Activated CD4-positive, alpha-beta T cell treated with anti-CD3 and anti-CD28 coated beads for 36 hours (primary cell): ENCODE measurements at regions of chr7 and their contacts with region 1.

Region 1: DNA sequence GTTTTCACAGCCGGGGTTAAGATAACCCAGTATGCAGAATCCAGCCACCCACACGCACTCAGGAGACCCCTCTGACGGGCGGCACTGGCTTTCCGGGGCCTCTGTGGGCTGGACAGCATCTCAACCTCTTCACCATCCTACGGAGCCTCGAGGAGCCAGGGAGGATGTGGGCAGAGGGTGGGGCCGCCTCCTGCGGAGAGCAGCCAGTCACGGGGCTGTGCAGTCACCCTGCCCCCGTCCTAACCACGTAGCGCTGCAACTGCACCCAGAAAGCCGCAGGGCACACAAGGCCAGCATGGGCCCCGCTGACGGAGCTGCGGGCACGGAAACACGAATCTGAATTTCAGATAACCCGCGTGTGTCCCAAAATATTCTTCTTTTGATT is 270.3 kb downstream of the ELFN1 start:
- DNase-seq: peak; percentile 96
- ATAC-seq: peak; percentile 90
- H3K4me3 Mint-ChIP-seq: peak overlapping the region; percentile 81
- H3K27ac Mint-ChIP-seq: peak overlapping the region; percentile 93
- H3K4me1 Mint-ChIP-seq: peaks cover 74% of the 10 kb centered on the region
- H3K27me3 Mint-ChIP-seq: no peaks in the 10 kb centered on the region

Region 2: GRCh38 chr7:923108-924041 is 1017.0 kb before region 1 on chr7:
- CTCF ChIA-PET with region 1: no interaction called
- POLR2A ChIA-PET with region 1: no interaction called
- intact Hi-C with region 1: loop called in 1 of 2 experiments (anchors 5 kb)
- DNase-seq: peak; percentile 97
- ATAC-seq: peak; percentile 92
- H3K4me3 Mint-ChIP-seq: peak overlapping the region; percentile 72
- H3K27ac Mint-ChIP-seq: peak overlapping the region; percentile 93
- H3K4me1 Mint-ChIP-seq: peaks cover 39% of the 10 kb centered on the region
- H3K27me3 Mint-ChIP-seq: no peaks in the 10 kb centered on the region

Region 3: DNA sequence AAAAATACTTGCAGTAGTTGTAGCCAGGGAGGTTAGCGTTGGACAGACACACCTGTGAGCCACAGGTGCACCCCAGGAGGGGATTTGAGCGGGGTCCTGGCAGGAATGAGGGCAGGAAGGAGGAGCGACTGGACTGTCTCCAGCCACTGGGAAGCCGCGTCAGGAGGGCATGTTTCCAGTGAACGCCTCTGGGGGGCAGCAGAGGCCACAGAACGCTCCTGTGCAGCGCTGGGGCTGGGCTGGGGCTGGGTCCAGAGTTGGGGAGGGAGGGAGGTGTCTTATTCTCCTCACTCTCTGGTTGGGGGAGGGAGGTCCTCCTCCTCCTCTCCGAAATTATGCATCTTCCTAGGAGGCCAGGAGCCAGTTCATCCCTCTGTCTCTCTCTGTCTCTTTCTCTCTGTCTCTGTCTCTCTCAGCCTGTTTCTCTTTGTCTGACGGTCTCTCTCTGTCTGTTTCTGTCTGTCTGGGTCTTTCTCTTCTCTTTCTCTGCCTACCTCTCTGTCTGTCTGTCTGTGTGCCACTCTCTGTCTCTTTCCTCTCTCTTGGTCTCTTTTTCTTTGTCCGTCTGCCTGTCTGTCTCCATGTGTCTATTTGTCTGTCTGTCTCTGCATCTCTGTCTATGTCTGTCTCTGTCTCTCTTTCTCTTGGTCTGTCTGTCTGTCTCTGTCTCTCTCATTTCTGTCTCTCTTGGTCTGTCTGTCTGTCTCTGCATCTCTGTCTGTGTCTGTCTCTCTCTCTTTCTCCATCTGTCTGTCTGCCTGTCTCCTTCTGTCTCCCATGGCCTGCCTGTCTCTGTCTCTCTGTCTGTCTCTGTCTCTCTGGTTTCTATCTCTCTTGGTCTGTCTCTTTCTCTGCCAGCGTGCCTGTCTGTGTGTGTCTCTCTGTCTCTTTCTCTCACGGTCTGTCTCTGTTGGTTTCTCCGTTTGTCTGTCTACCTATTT is 360.6 kb before region 1 on chr7:
- CTCF ChIA-PET with region 1: no interaction called
- POLR2A ChIA-PET with region 1: no interaction called
- intact Hi-C with region 1: loop called in 1 of 2 experiments (anchors 5 kb)
- DNase-seq: peak; percentile 86
- ATAC-seq: peak; percentile 100
- H3K4me3 Mint-ChIP-seq: no peak overlapping the region
- H3K27ac Mint-ChIP-seq: no peak overlapping the region
- H3K4me1 Mint-ChIP-seq: peaks cover 4% of the 10 kb centered on the region
- H3K27me3 Mint-ChIP-seq: no peaks in the 10 kb centered on the region

Region 4: DNA sequence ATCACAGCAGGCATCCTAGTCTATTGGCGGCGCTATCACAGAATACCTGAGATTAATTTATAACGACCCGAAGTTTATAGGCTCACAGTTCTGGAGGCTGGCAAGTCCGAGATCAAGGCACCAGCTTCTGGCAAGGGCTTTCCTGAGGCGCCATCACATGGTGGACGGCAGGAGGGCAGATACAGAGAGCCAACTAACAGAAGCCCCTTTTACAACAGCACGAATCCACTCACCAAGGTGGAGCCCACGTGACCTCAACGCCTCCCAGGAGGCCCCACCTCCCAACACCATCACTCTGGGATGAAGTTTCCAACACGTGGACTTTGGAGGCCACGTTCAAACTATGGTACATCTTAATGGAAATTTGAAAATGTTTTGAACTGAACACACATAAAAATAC is 15.0 kb before region 1 on chr7:
- CTCF ChIA-PET with region 1: interaction called, 3 read pairs
- POLR2A ChIA-PET with region 1: interaction called, 6 read pairs
- intact Hi-C with region 1: loop called (anchors 1 kb)
- DNase-seq: peak; percentile 45
- ATAC-seq: no peak
- H3K4me3 Mint-ChIP-seq: peak overlapping the region; percentile 10
- H3K27ac Mint-ChIP-seq: no peak overlapping the region
- H3K4me1 Mint-ChIP-seq: peaks cover 86% of the 10 kb centered on the region
- H3K27me3 Mint-ChIP-seq: peaks cover 21% of the 10 kb centered on the region

Region 5: GRCh38 chr7:2019607-2020511 is 79.5 kb after region 1 on chr7:
- CTCF ChIA-PET with region 1: no interaction called
- POLR2A ChIA-PET with region 1: interaction called, 3 read pairs
- intact Hi-C with region 1: loop called in 1 of 2 experiments (anchors 1 kb)
- DNase-seq: peak; percentile 81
- ATAC-seq: peak; percentile 93
- H3K4me3 Mint-ChIP-seq: peak overlapping the region; percentile 45
- H3K27ac Mint-ChIP-seq: peak overlapping the region; percentile 86
- H3K4me1 Mint-ChIP-seq: peaks cover 25% of the 10 kb centered on the region
- H3K27me3 Mint-ChIP-seq: no peaks in the 10 kb centered on the region

Region 6: GRCh38 chr7:2109936-2110585 is 169.7 kb after region 1 on chr7:
- CTCF ChIA-PET with region 1: no interaction called
- POLR2A ChIA-PET with region 1: no interaction called
- intact Hi-C with region 1: loop called in 1 of 2 experiments (anchors 5 kb)
- DNase-seq: peak; percentile 88
- ATAC-seq: peak; percentile 97
- H3K4me3 Mint-ChIP-seq: no peak overlapping the region
- H3K27ac Mint-ChIP-seq: peak overlapping the region; percentile 73
- H3K4me1 Mint-ChIP-seq: peaks cover 36% of the 10 kb centered on the region
- H3K27me3 Mint-ChIP-seq: no peaks in the 10 kb centered on the region